Prostate gland (tissue), 2 donors: ENCODE measurements at regions of chr2 and their contacts with region 1.

Region 1: GRCh38 chr2:25342372-25343186 is 854 bp upstream of the DNMT3A start:
- DNase-seq: peak; percentile 69
- H3K4me3 ChIP-seq: peak overlapping the region; percentile 73 to 75
- H3K27ac ChIP-seq: peak overlapping the region; percentile 68 to 85
- H3K4me1 ChIP-seq: peaks cover 5% of the 10 kb centered on the region
- H3K27me3 ChIP-seq: no peaks in the 10 kb centered on the region
- CTCF ChIP-seq: peak; percentile 79 to 99 (median 95)
- POLR2A ChIP-seq: peak; percentile 43

Region 2: GRCh38 chr2:25276569-25277465 is 65.8 kb before region 1 on chr2:
- intact Hi-C with region 1: loop called (anchors 1 kb)
- DNase-seq: no peak
- H3K4me3 ChIP-seq: peak overlapping the region; percentile 28 to 32
- H3K27ac ChIP-seq: peak overlapping the region; percentile 65 to 67
- H3K4me1 ChIP-seq: no peaks in the 10 kb centered on the region
- H3K27me3 ChIP-seq: no peaks in the 10 kb centered on the region
- CTCF ChIP-seq: peak; percentile 47 to 83 (median 62)
- POLR2A ChIP-seq: no peak

Region 3: GRCh38 chr2:25375371-25375988 is 32.9 kb after region 1 on chr2:
- intact Hi-C with region 1: loop called (anchors 2 kb)
- DNase-seq: no peak
- H3K4me3 ChIP-seq: no peak overlapping the region
- H3K27ac ChIP-seq: no peak overlapping the region
- H3K4me1 ChIP-seq: peaks cover 4% of the 10 kb centered on the region
- H3K27me3 ChIP-seq: no peaks in the 10 kb centered on the region
- CTCF ChIP-seq: no peak
- POLR2A ChIP-seq: no peak

Region 4: DNA sequence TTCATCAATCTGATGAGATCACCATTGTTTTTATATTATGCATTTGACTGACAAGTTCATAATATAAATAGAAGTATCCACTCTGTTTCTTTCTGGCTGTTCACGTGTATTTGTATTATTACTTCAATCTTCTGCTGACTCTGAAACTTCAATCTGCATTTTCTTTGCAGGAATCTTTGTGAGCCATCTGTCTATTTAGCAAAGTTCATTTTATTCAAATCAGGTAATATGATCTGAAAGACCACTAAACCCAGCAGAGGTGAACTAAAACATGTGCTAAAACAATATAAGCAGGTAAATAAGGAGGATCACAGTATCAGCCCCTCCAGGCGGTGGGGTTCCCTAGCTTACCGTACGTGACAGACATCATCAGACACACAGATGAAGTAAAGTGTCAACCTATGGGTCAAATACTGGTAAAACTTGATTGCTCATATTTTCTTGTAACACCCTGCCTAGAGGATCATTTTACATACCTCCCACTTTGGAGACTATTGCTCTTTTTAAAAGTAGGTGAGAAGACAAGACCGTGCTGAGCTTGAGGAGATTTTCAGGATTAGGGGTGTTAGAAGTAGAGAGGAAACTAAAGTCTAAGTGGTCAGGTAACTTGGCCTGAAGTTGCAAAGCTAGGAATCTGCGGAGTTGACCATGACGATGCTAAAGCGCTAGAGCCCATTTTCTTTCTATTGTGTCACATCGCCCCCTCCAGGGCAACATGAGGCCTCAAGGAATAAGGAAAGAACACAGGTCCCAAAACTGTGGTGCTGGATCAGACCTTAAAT is 321.8 kb after region 1 on chr2:
- intact Hi-C with region 1: loop called (anchors 10 kb)
- DNase-seq: peak; percentile 55
- H3K4me3 ChIP-seq: no peak overlapping the region
- H3K27ac ChIP-seq: peak overlapping the region in 1 of 2 donors; percentile 6
- H3K4me1 ChIP-seq: no peaks in the 10 kb centered on the region
- H3K27me3 ChIP-seq: no peaks in the 10 kb centered on the region
- CTCF ChIP-seq: peak; percentile 17 to 78 (median 66)
- POLR2A ChIP-seq: no peak